Naive thymus-derived CD4-positive, alpha-beta T cell (primary cell): ENCODE measurements at regions of chr11 and their contacts with region 1.

Region 1: DNA sequence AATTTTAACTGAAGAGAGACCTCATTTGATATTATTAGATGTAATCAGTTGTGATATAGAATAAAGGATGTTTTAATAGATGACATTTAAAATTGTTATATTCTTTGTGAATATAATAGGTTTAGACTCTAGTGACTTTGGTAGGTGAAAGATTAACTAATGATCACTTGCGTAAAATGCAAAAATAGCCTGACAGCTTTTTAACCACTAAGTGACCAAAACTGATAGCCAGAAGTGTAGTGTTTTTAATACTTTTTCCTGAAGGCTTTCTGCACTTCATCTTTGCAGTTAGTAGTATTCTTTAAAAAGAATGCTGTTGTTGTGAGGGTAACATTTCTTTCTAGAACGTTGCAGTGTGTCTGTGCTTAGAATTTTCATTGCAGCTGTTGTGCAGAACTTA is 5.1 kb downstream of the CAPRIN1 start:
- DNase-seq: no peak
- ATAC-seq: no peak
- H3K4me3 ChIP-seq: no peak overlapping the region
- H3K4me3 Mint-ChIP-seq: peak overlapping the region in 7 of 10 donors; percentile 21 to 59 (median 46)
- H3K27ac ChIP-seq: no peak overlapping the region
- H3K27ac Mint-ChIP-seq: peak overlapping the region in 2 of 9 donors; percentile 5 to 41
- H3K4me1 ChIP-seq: peaks cover 35 to 40% of the 10 kb centered on the region in 2 donors
- H3K4me1 Mint-ChIP-seq: peaks cover 25 to 74% (median 51%) of the 10 kb centered on the region in 7 donors
- H3K27me3 ChIP-seq: no peaks in the 10 kb centered on the region
- H3K27me3 Mint-ChIP-seq: no peaks in the 10 kb centered on the region

Region 2: GRCh38 chr11:34068111-34068510 is 11.4 kb after region 1 on chr11:
- CTCF ChIA-PET with region 1: no interaction called
- POLR2A ChIA-PET with region 1: interaction called, 6 read pairs
- intact Hi-C with region 1: loop called in 1 of 2 experiments (anchors 1 kb)
- DNase-seq: no peak
- ATAC-seq: no peak
- H3K4me3 ChIP-seq: no peak overlapping the region
- H3K4me3 Mint-ChIP-seq: peak overlapping the region in 5 of 10 donors; percentile 1 to 48 (median 12)
- H3K27ac ChIP-seq: no peak overlapping the region
- H3K27ac Mint-ChIP-seq: peak overlapping the region in 5 of 9 donors; percentile 1 to 56 (median 17)
- H3K4me1 ChIP-seq: peaks cover 9 to 14% of the 10 kb centered on the region in 2 donors
- H3K4me1 Mint-ChIP-seq: peaks cover 28 to 76% (median 64%) of the 10 kb centered on the region in 7 donors
- H3K27me3 ChIP-seq: no peaks in the 10 kb centered on the region
- H3K27me3 Mint-ChIP-seq: no peaks in the 10 kb centered on the region